Stomach (tissue), 19 donors: ENCODE measurements at regions of chr19 and their contacts with region 1.

Region 1: DNA sequence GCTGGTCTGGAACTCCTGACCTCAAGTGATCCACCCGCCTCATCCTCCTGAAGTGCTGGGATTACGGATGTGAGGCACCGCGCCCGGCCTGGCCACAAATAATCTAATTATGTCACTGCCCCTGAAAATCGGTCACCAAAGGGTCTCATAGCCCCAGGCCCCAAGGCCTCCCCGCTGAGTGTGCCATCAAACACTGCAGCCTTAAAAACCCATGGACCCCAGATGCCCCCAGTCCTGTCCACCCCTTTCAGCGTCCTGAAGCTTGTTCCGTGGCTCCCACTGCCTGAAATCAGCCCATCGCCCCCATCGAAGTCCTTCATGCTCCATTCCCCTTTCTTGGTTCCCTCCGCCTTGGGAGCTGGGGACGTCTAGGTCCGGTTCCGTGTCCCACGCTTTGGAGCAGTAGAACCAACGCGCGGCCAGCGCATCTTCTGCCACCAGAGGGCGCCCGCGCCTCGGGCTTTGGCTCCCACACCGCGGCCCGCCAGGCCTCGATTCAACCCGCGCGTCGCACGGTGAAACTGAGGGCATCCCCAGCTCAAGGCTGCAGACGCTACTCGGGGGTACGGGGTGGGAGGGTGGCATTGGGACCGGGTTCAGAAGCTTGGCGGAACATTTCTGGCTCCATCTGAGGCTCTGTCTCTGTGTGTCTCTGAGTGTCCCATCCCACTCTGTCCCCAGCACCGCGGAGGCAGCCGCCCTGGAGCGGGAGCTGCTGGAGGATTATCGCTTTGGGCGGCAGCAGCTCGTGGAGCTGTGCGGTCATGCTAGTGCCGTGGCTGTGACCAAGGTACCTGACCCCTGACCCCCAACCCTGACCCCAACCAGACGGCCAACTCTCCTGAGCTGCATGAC is 3.5 kb downstream of the YJEFN3 start:
- DNase-seq: peak; percentile 92
- H3K4me3 ChIP-seq: no peak overlapping the region
- H3K27ac ChIP-seq: no peak overlapping the region
- H3K4me1 ChIP-seq: peaks cover 0 to 29% (median 15%) of the 10 kb centered on the region in 4 donors
- H3K27me3 ChIP-seq: peaks cover 0 to 15% (median 3%) of the 10 kb centered on the region in 3 donors
- CTCF ChIP-seq: peak in 5 of 7 experiments; percentile 88 to 97 (median 91)
- EP300 ChIP-seq: no peak
- POLR2A ChIP-seq: no peak

Region 2: GRCh38 chr19:19956434-19957075 is 424.4 kb after region 1 on chr19:
- intact Hi-C with region 1: loop called (anchors 10 kb)
- DNase-seq: peak in 1 of 2 donors; percentile 33
- H3K4me3 ChIP-seq: no peak overlapping the region
- H3K27ac ChIP-seq: no peak overlapping the region
- H3K4me1 ChIP-seq: no peaks in the 10 kb centered on the region
- H3K27me3 ChIP-seq: no peaks in the 10 kb centered on the region
- CTCF ChIP-seq: no peak
- EP300 ChIP-seq: no peak
- POLR2A ChIP-seq: no peak